ENCODE measurements at regions of chr5 and their contacts with region 1.

Region 1: GRCh38 chr5:43313035-43313853 is at the start of gene HMGCS1:
- DNase-seq: peak; percentile 100
- H3K4me3 Mint-ChIP-seq: peak within 1 kb of the TSS; percentile 89
- H3K27ac Mint-ChIP-seq: peak within 1 kb of the TSS; percentile 94
- H3K4me1 Mint-ChIP-seq: peaks cover 56% of the 10 kb centered on the region
- H3K27me3 Mint-ChIP-seq: no peaks in the 10 kb centered on the region
- total RNA-seq, gene HMGCS1: 230 and 241 TPM in 2 replicates

Region 2: DNA sequence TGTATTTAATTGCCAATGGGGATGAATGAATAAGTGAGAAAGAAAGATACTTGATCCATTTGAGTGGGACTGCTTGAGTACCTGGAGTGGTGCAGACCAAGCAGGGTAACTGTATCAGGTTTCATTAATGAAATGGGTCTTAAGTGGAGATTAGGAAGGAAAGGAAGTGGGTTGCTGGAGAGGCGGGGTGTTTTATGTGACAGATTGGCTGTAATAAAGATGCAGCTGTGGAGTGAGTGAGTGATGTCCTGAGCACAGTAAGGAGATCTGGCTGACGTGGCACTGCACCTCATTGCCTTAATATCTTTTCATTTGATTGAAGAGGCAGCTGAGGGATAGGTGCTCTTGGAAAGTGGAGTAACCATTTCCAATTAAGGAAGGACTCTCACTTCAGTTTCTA is 717.6 kb before region 1 on chr5:
- intact Hi-C with region 1: no loop called
- DNase-seq: no peak
- H3K4me3 Mint-ChIP-seq: no peak overlapping the region
- H3K27ac Mint-ChIP-seq: no peak overlapping the region
- H3K4me1 Mint-ChIP-seq: no peaks in the 10 kb centered on the region
- H3K27me3 Mint-ChIP-seq: peaks cover 5% of the 10 kb centered on the region

Region 3: GRCh38 chr5:42994246-42995151 is 318.7 kb before region 1 on chr5:
- intact Hi-C with region 1: loop called (anchors 1 kb)
- DNase-seq: peak; percentile 97
- H3K4me3 Mint-ChIP-seq: peak overlapping the region; percentile 96
- H3K27ac Mint-ChIP-seq: peak overlapping the region; percentile 100
- H3K4me1 Mint-ChIP-seq: peaks cover 40% of the 10 kb centered on the region
- H3K27me3 Mint-ChIP-seq: no peaks in the 10 kb centered on the region

Region 4: DNA sequence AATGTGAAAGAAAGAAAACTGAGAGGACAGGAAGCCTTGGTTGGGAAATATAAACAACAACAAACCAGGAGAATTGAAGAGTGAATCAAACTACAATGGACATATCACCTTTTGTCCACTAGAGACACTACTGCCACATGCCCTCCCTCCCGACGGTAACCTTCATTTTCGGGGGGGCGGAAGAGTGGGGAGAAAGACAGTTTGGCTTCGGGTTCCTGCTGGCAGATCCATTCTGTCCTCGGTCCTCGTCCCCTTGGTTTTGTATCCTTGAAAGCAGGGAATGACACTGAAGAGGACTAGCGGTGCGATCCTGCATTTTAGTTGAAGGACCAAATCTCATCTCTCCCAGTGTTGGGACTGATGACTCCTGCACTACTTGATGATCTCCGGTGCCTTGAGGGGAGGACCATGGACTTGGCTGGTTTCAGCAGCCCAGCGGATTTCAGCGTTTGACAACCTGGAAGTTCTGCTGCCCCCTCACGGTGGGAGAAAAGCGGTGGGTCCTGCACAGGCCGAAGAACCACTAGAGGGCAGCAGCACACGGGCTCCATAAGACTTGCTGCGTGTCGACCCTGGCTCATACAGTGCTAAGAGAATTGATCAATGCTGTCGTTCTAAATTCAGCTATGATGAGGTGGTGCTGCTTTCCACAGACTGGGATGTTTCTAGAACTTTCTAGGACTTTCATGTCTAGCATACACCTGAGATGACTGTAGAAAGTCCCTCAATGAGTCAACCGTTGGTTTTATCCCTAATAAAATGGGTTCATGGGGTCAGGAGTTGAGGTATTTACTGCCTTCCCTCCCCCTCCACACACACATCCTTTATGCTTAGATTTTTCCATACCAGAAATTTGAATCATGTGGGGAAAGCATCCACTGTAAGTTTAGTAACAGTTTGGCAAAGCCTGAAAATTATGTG is 207.6 kb before region 1 on chr5:
- intact Hi-C with region 1: loop called (anchors 1 kb)
- DNase-seq: peak; percentile 96
- H3K4me3 Mint-ChIP-seq: peak overlapping the region; percentile 87
- H3K27ac Mint-ChIP-seq: peak overlapping the region; percentile 90
- H3K4me1 Mint-ChIP-seq: peaks cover 39% of the 10 kb centered on the region
- H3K27me3 Mint-ChIP-seq: no peaks in the 10 kb centered on the region

Region 5: DNA sequence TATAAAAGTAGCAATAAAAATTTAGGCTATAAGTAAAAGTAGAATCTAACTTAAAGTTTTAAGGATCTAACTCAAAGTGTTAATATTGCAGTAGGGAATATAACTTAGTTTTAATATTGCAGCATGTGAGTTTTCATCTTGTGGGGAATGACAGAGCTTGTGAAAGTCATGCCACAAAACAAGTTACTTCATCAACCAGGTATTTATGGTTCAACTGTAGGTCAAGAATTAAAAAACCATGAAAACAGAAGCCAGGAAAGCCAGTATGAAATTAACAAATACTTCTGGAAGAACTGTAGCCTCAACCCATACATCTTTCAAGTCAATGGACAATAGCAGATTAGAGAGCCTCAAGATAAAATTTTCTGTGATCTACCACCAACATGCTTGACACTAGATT is 19.0 kb before region 1 on chr5:
- intact Hi-C with region 1: no loop called
- DNase-seq: no peak
- H3K4me3 Mint-ChIP-seq: no peak overlapping the region
- H3K27ac Mint-ChIP-seq: peak overlapping the region; percentile 25
- H3K4me1 Mint-ChIP-seq: peaks cover 15% of the 10 kb centered on the region
- H3K27me3 Mint-ChIP-seq: no peaks in the 10 kb centered on the region

Region 6: GRCh38 chr5:43336159-43336558 is 22.9 kb after region 1 on chr5:
- intact Hi-C with region 1: loop called (anchors 1 kb)
- DNase-seq: no peak
- H3K4me3 Mint-ChIP-seq: no peak overlapping the region
- H3K27ac Mint-ChIP-seq: peak overlapping the region; percentile 63
- H3K4me1 Mint-ChIP-seq: peaks cover 9% of the 10 kb centered on the region
- H3K27me3 Mint-ChIP-seq: no peaks in the 10 kb centered on the region

Region 7: GRCh38 chr5:43514816-43515677 is 201.8 kb after region 1 on chr5 and contains the start of gene C5orf34:
- intact Hi-C with region 1: loop called (anchors 10 kb)
- DNase-seq: peak; percentile 98
- H3K4me3 Mint-ChIP-seq: peak within 1 kb of the TSS; percentile 95
- H3K27ac Mint-ChIP-seq: peak within 1 kb of the TSS; percentile 96
- H3K4me1 Mint-ChIP-seq: peaks cover 23% of the 10 kb centered on the region
- H3K27me3 Mint-ChIP-seq: no peaks in the 10 kb centered on the region
- total RNA-seq, gene C5orf34: 6.8 and 8.7 TPM in 2 replicates

Region 8: DNA sequence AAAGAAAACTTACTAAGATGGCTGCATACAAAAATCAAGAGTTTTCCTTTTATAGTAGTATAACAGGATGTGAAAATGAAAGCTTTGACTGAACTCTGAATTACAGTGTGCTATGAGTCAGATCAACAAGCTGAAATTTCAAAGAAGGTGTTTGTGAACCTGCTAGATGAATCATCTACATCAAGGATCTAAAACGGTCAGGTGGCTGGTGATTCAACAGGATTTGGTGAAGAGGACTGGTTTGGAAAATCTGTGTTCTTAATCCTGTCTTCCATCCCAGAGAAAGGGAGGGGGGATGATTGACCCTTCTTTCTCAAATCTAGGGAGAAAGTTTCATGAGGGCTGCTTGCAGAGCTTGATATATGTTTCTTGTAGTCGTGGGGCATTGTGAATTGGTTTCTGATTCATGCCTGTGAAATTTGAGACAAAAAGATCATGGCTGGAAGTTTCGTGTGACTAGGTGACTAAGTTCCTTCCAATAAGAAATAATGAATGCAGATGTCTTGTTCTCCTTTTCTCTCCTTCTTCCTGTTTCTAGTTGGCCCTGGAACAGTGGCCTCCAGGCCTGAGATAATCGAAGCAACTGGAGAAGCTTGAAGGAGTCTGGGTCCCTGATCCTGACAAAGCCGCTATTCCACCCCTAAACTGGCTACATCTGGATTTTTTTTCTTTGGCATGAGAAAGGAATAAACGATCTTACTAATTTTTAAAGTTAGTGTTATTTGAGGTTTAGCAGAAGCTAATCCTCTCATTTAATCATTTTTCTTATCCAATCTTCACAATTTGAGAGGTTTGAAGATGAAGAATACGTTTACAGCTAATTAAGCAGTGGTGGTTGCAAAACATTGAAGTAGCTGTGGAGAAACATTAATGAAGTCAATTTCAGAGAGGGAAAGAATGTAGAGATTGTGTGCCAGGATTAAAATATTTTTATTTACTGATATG is 1562.7 kb after region 1 on chr5:
- intact Hi-C with region 1: loop called (anchors 5 kb)
- DNase-seq: peak; percentile 80
- H3K4me3 Mint-ChIP-seq: peak overlapping the region; percentile 76
- H3K27ac Mint-ChIP-seq: peak overlapping the region; percentile 96
- H3K4me1 Mint-ChIP-seq: peaks cover 13% of the 10 kb centered on the region
- H3K27me3 Mint-ChIP-seq: no peaks in the 10 kb centered on the region

Measured in activated CD4-positive, alpha-beta T cell treated with anti-CD3 and anti-CD28 coated beads, Interleukin-2, amount 10 ng/mL, durations not matched to agents 24 days and 14 days (primary cell).